K562 (cell line): ENCODE measurements at regions of chr1 and their contacts with region 1.

Region 1: GRCh38 chr1:44819608-44820327 is 11.4 kb downstream of the BTBD19 start:
- DNase-seq: peak; percentile 90 to 97 (median 93)
- ATAC-seq: peak; percentile 96
- H3K4me3 ChIP-seq: peak overlapping the region; percentile 36
- H3K27ac ChIP-seq: peak overlapping the region; percentile 100
- H3K4me1 ChIP-seq: peaks cover 13 to 28% of the 10 kb centered on the region in 2 experiments
- H3K27me3 ChIP-seq: no peaks in the 10 kb centered on the region
- CTCF ChIP-seq: peak; percentile 26 to 49 (median 49); a peak in 4 of 6 replicates
- EP300 ChIP-seq: peak; percentile 73
- POLR2A ChIP-seq: peak; percentile 100
- RAD21 ChIP-seq: peak; percentile 41 to 53; a peak in 3 of 4 replicates

Region 2: GRCh38 chr1:44721485-44722361 is 98.0 kb before region 1 on chr1:
- CTCF ChIA-PET with region 1: no interaction called
- POLR2A ChIA-PET with region 1: interaction called, 222 read pairs
- in situ Hi-C with region 1: no loop called
- intact Hi-C with region 1: loop called (anchors 1 kb)
- DNase-seq: peak; percentile 91 to 98 (median 94)
- ATAC-seq: peak; percentile 97
- H3K4me3 ChIP-seq: no peak overlapping the region
- H3K27ac ChIP-seq: peak overlapping the region; percentile 95
- H3K4me1 ChIP-seq: peaks cover 17 to 24% of the 10 kb centered on the region in 2 experiments
- H3K27me3 ChIP-seq: peaks cover 2 to 12% of the 10 kb centered on the region in 2 experiments; a peak in 4 of 5 replicates
- CTCF ChIP-seq: no peak; a peak in 2 of 6 replicates
- EP300 ChIP-seq: peak; percentile 86
- POLR2A ChIP-seq: peak; percentile 100
- RAD21 ChIP-seq: peak in 1 of 2 experiments; percentile 56; a peak in 2 of 4 replicates

Region 3: GRCh38 chr1:44786138-44786840 is 33.5 kb before region 1 on chr1:
- CTCF ChIA-PET with region 1: no interaction called
- POLR2A ChIA-PET with region 1: interaction called, 107 read pairs
- in situ Hi-C with region 1: no loop called
- intact Hi-C with region 1: no loop called
- DNase-seq: peak; percentile 78 to 84 (median 82)
- ATAC-seq: peak; percentile 84
- H3K4me3 ChIP-seq: no peak overlapping the region
- H3K27ac ChIP-seq: no peak overlapping the region
- H3K4me1 ChIP-seq: peaks cover 8 to 18% of the 10 kb centered on the region in 2 experiments; a peak in 4 of 5 replicates
- H3K27me3 ChIP-seq: no peaks in the 10 kb centered on the region
- CTCF ChIP-seq: peak; percentile 95 to 99 (median 96)
- EP300 ChIP-seq: no peak
- POLR2A ChIP-seq: no peak
- RAD21 ChIP-seq: peak; percentile 24 to 91

Region 4: DNA sequence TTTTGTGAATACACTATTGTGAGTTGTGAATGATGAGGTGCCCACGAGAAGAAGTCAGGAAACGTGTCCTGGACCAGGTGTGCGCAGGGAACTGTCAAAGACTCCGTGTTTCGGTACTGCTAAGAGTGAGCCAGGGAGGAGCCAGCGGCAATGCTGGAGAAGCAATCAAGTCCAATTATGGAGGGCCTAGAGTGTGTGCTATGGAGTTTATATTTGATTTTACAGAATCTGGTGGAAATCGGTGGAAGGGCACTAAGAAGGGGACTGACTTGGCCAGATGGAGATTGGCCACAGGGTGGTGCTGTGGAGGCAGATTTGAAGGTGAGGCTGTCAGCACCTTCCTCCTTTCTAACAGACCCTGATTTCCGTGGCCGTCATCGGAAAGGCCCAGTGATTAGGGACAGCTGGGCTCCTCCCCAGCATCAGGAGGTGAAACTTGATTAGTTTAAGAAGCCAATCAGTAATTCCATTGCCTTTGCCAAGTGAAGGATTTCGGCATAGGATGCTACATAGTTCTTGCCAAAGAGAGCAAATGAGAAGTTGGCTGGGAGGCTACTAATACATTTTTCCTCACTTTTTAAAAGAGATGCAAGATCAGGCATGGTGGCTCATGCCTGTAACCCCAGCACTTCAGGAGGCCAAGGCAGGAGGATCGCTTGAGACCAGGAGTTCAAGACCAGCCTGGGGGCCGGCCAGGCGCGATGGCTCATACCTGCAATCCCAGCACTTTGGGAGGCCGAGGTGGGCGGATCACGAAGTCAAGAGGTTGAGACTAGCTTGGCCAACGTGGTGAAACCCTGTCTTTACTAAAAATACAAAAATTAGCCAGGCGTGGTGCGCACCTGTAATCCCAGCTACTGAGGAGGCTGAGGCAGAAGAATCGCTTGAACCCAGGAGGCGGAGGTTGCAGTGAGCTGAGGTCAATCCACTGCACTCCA is 16.2 kb after region 1 on chr1:
- CTCF ChIA-PET with region 1: no interaction called
- POLR2A ChIA-PET with region 1: interaction called, 217 read pairs
- in situ Hi-C with region 1: no loop called
- intact Hi-C with region 1: no loop called
- DNase-seq: peak; percentile 75 to 93 (median 81)
- ATAC-seq: peak; percentile 87
- H3K4me3 ChIP-seq: no peak overlapping the region
- H3K27ac ChIP-seq: no peak overlapping the region
- H3K4me1 ChIP-seq: peaks cover 30 to 36% of the 10 kb centered on the region in 2 experiments
- H3K27me3 ChIP-seq: no peaks in the 10 kb centered on the region
- CTCF ChIP-seq: peak; percentile 87 to 98 (median 92)
- EP300 ChIP-seq: peak; percentile 56; the same call in 1 of the 2 replicates
- POLR2A ChIP-seq: no peak
- RAD21 ChIP-seq: peak; percentile 82 to 93

Region 5: DNA sequence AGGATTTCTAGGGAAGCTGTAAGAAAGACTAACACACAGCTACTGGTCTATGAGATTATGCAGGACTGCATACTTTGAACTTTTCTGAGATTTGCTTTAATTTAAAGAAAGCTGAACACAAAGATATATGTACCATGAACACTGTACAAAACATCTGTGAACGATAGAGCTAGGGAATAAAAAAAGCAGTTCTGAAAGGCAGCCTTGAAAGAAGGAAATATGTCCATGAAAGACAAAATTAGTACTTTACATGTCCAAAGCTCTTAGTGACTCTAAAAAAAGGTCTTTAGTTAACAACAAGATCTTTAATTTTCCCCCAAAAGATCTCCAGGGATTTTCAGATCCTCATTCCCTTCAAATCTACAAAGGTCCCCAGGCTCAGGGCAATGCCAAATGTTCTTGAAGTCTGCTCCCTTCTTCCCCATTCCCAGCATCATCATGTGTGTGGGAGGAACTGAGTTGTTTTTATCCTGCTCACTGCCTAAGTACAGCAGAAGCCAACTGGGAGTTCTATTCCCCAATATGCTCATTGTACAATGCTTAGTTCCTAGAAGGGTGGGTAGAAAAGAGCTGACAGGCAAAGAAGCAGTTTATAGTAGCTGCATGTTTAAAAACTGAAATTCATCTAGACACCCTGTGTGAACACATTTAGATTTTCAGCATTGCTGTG is 83.4 kb after region 1 on chr1:
- CTCF ChIA-PET with region 1: no interaction called
- POLR2A ChIA-PET with region 1: interaction called, 11 read pairs
- in situ Hi-C with region 1: no loop called
- intact Hi-C with region 1: no loop called
- DNase-seq: no peak
- ATAC-seq: peak; percentile 32; the same call in 2 of the 3 replicates
- H3K4me3 ChIP-seq: no peak overlapping the region
- H3K27ac ChIP-seq: no peak overlapping the region
- H3K4me1 ChIP-seq: peaks cover 2 to 3% of the 10 kb centered on the region in 2 experiments; a peak in 1 of 5 replicates
- H3K27me3 ChIP-seq: no peaks in the 10 kb centered on the region
- CTCF ChIP-seq: no peak
- EP300 ChIP-seq: no peak
- POLR2A ChIP-seq: no peak
- RAD21 ChIP-seq: no peak

Region 6: DNA sequence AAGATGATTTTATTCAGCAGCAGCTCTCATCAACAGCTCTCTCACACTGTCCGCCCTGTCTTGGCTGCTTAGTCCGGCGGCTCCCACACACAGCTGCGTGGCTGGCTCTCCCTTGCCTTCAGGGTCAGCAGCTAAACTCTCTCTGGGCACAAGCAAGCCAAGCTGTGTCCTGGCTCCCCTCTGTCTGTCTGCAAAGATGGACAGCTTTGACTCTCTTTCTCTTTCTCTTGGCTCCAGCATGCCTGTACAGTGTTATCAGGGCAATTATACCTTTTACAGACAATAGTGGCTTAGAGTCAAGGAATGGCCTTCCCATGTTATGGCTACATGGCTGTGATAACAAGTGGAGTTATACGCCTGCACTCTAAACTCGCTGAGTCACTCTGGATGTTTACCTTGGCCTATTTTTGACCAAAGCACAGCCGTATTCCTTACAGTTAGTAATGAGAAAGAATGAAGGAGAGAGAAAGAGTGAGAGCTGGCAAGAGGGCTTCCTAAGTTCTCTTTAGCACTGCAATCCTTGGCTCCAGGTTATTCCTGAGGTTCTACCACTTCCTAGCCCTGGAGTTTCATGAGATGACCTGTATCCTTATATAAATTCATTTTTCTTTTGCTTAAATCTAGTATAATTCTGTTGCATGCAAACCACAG is 446.5 kb after region 1 on chr1:
- CTCF ChIA-PET with region 1: no interaction called
- POLR2A ChIA-PET with region 1: interaction called, 10 read pairs
- in situ Hi-C with region 1: no loop called
- intact Hi-C with region 1: no loop called
- DNase-seq: peak in 3 of 4 experiments; percentile 17 to 89 (median 44)
- ATAC-seq: peak; percentile 92
- H3K4me3 ChIP-seq: peak overlapping the region; percentile 8; the same call in 1 of the 2 replicates
- H3K27ac ChIP-seq: peak overlapping the region; percentile 71
- H3K4me1 ChIP-seq: peaks cover 8 to 27% of the 10 kb centered on the region in 2 experiments
- H3K27me3 ChIP-seq: peaks cover 0 to 12% of the 10 kb centered on the region in 2 experiments; a peak in 1 of 5 replicates
- CTCF ChIP-seq: no peak
- EP300 ChIP-seq: peak; percentile 83
- POLR2A ChIP-seq: no peak
- RAD21 ChIP-seq: peak; percentile 8 to 38; a peak in 2 of 4 replicates